ENCODE measurements at regions of chr14 and their contacts with region 1.

Region 1: GRCh38 chr14:102819176-102819628 is 42.0 kb downstream of the TRAF3 start:
- DNase-seq: peak; percentile 91
- ATAC-seq: peak; percentile 74
- H3K4me3 Mint-ChIP-seq: peak overlapping the region; percentile 61
- H3K27ac Mint-ChIP-seq: peak overlapping the region; percentile 94
- H3K4me1 Mint-ChIP-seq: peaks cover 87% of the 10 kb centered on the region
- H3K27me3 Mint-ChIP-seq: no peaks in the 10 kb centered on the region

Region 2: DNA sequence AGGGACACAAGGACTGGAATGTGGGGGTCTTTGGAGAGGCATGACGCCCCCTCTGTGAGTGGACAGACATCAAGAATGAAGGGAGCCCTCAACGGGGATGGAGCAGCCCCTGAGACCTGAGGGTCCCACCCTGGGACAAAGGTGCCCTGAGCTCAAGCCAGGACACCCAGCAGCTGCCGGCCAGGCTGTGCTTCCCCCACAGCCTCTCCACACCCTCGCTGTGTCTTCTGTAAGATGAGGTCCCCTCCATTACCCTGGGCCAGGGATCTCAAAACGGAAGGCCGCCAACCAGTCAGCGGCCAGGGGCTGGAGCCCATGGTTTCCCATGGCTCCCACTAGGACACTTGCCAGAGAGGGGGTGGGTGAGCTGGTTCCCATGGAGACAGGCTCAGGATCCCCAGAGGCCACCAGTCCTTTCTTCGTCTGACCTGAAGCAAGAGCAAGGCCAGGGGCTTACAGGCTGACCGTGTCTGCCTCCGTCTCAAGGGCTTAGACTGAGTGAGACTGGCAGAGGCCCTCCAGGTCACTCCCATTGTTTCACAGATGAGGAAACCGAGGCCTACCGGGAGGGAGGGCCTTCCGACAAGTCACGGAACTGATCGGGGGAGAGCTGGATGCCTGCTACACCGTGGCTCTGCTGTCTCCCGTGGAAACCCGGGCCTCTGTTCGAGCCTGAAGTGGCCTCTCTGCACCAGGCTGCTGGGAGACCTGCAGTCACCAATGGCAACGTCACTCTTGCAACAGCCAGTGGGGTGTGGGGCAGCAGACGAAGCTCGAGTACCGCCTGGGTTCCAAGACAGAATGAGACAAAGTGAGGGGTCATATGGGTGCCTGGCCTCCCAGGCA is 1349.6 kb before region 1 on chr14:
- CTCF ChIA-PET with region 1: no interaction called
- POLR2A ChIA-PET with region 1: no interaction called
- intact Hi-C with region 1: no loop called
- DNase-seq: no peak
- ATAC-seq: no peak
- H3K4me3 Mint-ChIP-seq: no peak overlapping the region
- H3K27ac Mint-ChIP-seq: no peak overlapping the region
- H3K4me1 Mint-ChIP-seq: no peaks in the 10 kb centered on the region
- H3K27me3 Mint-ChIP-seq: peaks cover 2% of the 10 kb centered on the region

Region 3: DNA sequence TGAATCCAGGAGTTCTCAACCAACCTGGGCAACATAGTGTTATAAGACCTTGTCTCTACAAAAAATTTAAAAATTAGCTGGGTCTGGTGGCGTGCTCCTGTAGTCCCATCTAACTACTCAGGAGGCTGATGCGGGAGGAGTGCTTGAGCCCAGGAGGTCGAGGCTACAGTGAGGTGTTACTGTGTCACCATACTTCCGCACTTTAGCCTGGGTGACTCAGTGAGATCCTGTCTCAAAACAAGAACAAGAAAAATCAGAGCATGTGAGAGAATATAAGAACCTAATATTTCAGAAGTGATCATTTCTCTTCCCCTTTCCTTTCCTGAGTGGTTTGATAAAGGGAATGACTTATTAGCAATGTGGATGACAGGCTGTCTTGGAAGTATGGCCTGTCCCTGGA is 32.4 kb before region 1 on chr14:
- CTCF ChIA-PET with region 1: interaction called, 8 read pairs
- POLR2A ChIA-PET with region 1: interaction called, 14 read pairs
- intact Hi-C with region 1: loop called in 1 of 2 experiments (anchors 1 kb)
- DNase-seq: peak; percentile 64
- ATAC-seq: peak; percentile 78
- H3K4me3 Mint-ChIP-seq: peak overlapping the region; percentile 13
- H3K27ac Mint-ChIP-seq: peak overlapping the region; percentile 81
- H3K4me1 Mint-ChIP-seq: peaks cover 91% of the 10 kb centered on the region
- H3K27me3 Mint-ChIP-seq: no peaks in the 10 kb centered on the region

Region 4: DNA sequence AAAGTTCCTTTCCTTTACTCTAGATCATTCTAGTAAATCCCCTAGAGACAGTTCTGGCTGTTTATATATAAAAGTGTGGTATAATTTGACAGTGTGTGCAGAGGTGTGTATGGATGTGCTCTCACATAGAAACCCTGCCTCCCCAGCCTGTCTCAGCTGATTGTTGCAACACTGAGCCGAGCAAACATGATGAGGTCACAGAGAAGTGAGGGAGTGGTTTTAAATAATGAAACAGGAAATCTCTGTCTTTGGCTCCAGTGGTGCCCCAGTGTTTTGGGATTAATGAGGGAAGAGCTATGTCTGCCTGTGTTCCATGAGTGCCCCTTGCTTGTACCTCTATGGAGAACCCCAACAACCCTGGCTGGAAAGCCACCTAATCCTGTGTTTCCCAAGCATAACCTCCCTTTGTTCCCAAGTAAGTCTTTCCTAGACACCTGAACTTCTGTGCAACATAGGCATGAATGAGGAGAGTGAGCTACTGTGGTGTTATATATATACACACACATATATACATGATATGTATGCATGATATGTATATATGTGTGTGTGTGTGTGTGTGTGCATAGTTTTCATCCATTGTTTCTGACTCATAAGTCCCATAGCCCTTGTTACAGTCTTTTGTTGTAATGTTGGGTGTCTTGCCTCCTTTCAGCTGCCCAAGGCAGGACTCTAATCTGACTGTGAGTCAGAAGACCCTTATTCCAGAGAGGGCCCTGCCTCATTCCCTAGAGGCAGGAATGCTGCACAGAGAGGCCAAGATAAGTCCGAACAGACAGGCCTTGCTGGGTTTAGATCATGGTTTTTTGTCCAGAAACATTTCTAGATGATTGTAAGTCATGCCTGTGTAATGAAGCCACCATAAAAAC is 23.9 kb before region 1 on chr14:
- CTCF ChIA-PET with region 1: interaction called, 5 read pairs
- POLR2A ChIA-PET with region 1: interaction called, 10 read pairs
- intact Hi-C with region 1: loop called in 1 of 2 experiments (anchors 1 kb)
- DNase-seq: peak; percentile 67
- ATAC-seq: peak; percentile 80
- H3K4me3 Mint-ChIP-seq: no peak overlapping the region
- H3K27ac Mint-ChIP-seq: peak overlapping the region; percentile 72
- H3K4me1 Mint-ChIP-seq: peaks cover 84% of the 10 kb centered on the region
- H3K27me3 Mint-ChIP-seq: no peaks in the 10 kb centered on the region

Region 5: DNA sequence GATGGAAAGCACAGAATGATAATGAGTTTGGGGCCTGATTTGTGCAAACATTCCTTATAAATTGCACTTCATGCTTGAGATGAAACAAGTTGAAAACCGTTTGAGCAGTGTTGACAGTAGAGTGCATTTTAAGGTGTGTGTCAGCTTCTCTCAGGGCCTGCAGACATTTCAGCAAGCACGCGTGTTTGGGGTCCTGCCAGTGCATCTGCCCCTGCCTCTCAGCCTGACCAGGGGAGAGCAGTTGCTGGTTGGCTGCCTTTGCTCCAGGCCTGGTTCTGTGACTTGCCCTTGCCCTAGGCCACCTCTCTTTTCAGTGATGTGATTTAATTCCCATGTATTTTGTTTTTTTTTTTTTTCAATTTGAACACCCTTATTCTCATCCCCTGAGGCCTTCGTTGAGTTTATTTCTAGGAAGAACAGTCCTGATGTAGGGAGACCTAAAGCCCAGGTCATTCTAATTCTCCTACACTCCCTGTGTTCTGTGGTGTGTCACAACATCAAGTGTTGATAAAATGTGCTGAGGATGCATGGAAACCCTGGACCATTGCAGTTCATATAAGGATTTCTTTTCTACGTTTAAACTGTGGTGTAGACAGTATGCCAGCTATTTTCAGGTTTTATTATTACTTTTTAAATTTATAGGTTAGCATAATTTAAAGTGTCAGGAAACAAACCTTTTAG is 63.2 kb after region 1 on chr14:
- CTCF ChIA-PET with region 1: no interaction called
- POLR2A ChIA-PET with region 1: no interaction called
- intact Hi-C with region 1: loop called (anchors 1 kb)
- DNase-seq: no peak
- ATAC-seq: no peak
- H3K4me3 Mint-ChIP-seq: no peak overlapping the region
- H3K27ac Mint-ChIP-seq: peak overlapping the region; percentile 66
- H3K4me1 Mint-ChIP-seq: peaks cover 28% of the 10 kb centered on the region
- H3K27me3 Mint-ChIP-seq: no peaks in the 10 kb centered on the region

Measured in activated CD4-positive, alpha-beta T cell treated with anti-CD3 and anti-CD28 coated beads for 36 hours (primary cell).